ENCODE measurements at regions of chr9 and their contacts with region 1.

Region 1: DNA sequence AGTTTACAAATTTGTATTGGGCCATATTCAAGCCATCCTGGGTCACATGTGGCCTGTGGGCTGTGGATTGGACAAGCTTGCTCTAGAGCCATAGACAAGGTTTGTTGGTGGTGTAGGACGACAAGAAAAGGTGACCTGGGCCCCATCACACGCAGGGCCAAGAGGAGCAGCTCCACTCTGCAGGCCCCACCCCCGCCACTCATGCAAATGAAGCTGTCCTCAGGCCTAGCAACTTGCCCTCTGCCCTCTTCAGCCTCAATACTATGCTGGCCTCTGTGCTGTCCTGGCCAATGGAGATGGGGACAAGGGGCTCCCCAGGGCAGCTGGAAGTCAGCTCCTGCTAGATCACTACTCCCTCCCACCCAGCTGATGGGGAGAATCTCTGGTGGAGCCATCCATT is 55.2 kb upstream of the TMEM252 start:
- DNase-seq: no peak
- H3K4me3 ChIP-seq: no peak overlapping the region
- H3K27ac ChIP-seq: no peak overlapping the region
- H3K4me1 ChIP-seq: no peaks in the 10 kb centered on the region
- H3K27me3 ChIP-seq: no peaks in the 10 kb centered on the region
- CTCF ChIP-seq: no peak
- POLR2A ChIP-seq: no peak

Region 2: DNA sequence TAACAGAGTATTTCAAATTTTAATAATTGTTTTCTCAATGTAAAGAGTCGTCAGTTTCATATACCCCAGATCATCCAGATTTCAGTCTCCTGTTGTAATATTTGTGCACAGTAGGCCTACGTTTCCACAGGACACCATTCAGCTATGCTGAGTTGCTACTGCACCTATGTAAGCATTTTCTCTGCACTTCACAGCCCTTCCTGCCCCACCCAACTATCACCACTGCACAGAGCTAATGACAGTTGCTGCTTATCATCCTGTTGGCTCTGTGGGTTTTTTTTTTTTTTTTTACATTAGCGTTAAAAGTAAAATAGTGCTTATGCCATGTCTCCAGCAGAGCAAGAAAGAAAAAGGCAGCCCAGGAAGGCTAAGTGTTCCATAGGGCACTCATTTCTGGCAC is 423.9 kb after region 1 on chr9:
- intact Hi-C with region 1: loop called (anchors 5 kb)
- DNase-seq: no peak
- H3K4me3 ChIP-seq: no peak overlapping the region
- H3K27ac ChIP-seq: no peak overlapping the region
- H3K4me1 ChIP-seq: no peaks in the 10 kb centered on the region
- H3K27me3 ChIP-seq: no peaks in the 10 kb centered on the region
- CTCF ChIP-seq: no peak
- POLR2A ChIP-seq: no peak